ENCODE measurements at regions of chr20 and their contacts with region 1.

Region 1: DNA sequence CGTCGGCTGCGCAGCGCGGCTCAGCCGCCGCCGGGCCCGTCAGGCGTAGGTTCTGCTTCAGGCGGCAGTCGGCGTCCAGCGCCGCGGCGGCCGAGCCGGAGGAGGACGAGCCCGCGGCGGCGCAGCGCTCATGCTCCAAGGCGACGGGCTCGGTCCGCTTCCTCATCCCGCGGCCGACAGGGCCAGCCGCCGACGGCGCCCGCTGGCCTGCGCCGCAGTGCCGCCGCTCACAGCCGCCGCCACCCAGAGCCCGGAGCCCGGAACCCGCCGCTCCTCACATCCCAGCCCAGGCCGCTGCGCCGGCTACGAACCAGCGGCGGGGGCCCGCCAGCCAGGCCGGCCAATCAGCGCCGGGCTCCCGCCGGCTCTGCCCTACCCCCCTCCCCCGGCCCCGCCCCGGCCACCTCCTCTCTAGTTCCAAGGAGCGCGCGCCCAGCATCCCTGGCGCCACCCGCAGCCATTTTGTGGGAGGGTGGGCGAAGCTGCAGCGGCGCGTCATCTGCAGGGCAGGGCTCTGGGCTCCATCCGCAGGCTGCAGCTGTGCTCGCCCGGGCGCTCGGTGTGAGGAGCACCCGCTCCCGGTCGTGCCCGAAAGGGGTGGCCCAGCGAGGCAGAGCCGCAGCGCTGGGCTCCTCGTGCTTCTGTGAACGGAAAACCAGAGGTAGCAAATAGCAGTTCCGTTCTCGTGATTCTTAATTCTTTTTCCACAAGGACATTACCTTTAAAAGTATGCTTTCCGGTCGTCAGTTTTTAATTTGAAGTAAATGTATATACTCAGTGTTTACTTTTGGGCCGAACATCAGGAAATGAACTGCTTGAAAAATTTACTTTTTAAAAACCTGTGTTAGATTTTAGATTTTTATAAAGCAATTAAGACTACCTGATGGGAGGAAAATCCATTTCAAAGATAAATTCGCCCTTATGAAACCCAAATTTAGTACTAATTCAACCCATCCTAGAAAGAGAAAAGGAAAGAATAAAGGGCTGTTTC is at the start of gene ABHD12:
- H3K4me3 Mint-ChIP-seq: peak within 1 kb of the TSS; percentile 81
- H3K27ac Mint-ChIP-seq: peak within 1 kb of the TSS; percentile 92
- H3K4me1 Mint-ChIP-seq: peaks cover 17% of the 10 kb centered on the region
- H3K27me3 Mint-ChIP-seq: no peaks in the 10 kb centered on the region

Region 2: DNA sequence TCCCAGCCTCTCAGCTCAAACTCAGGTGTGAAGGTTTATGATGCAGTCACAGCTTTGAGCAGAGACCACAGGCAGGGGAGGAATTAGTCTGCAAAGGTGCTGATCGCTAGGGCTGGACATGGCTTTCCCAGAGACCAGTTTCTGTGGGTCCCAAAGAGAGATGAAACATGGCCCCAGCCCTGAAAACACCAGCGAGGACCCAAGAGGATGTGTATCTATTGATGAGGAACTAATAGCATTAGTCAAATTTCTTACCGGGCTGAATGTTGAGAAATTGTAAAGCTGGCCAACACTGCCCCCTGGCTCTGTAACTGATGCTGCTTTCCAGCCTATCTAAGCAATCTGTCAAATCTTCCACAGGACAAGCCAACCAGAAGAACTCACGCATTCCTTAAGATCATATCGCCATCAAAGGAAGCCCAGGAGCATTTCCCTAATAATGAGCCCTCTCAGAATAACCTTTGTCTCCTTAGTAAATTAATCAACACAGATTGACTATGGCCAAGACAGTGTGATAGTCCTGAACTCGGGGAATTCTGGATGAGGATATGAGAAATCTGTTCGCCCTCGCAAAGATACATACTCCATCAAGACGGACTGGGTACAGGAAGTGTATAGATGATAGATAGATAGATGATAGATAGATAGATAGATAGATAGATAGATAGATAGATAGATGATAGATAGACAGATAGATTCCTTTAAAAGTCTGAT is 325.1 kb before region 1 on chr20:
- intact Hi-C with region 1: loop called (anchors 10 kb)
- H3K4me3 Mint-ChIP-seq: no peak overlapping the region
- H3K27ac Mint-ChIP-seq: no peak overlapping the region
- H3K4me1 Mint-ChIP-seq: peaks cover 5% of the 10 kb centered on the region
- H3K27me3 Mint-ChIP-seq: peaks cover 40% of the 10 kb centered on the region

Region 3: GRCh38 chr20:25247956-25248785 is 142.7 kb before region 1 on chr20 and contains the start of gene PYGB:
- intact Hi-C with region 1: loop called (anchors 2 kb)
- H3K4me3 Mint-ChIP-seq: peak within 1 kb of the TSS; percentile 91
- H3K27ac Mint-ChIP-seq: peak within 1 kb of the TSS; percentile 82
- H3K4me1 Mint-ChIP-seq: peaks cover 59% of the 10 kb centered on the region
- H3K27me3 Mint-ChIP-seq: peaks cover 6% of the 10 kb centered on the region

Region 4: DNA sequence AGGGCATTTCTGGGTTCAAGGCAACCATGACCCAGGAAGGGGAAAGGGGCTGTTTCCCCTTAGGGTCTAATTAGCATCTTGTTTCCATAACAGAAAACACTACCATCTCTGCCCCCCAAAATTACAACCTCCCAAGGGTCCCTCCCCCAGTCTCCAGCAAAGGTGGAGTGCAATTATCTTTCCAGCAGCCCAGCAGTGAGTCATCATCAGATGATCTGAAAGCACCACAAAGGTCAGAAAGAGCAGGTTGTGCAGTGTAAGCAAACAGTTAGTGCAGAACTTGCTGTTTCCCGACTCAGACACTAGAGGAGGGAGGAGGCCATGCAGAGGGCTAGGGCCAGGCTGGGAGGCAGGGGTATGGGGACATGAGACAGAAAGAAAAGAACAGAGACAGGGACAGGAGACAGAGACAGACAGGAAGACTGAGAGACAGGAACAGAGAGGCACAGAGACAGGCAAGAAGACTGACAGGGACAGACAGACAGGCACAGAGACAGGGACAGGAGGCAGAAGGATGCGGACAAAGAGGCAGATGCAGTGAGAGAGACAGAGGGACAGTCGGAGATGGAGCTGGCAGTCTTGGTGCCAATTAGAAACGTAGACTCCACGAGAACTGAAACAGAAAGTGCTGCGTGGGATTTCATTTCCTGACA is 80.4 kb before region 1 on chr20:
- intact Hi-C with region 1: loop called (anchors 2 kb)
- H3K4me3 Mint-ChIP-seq: peak overlapping the region; percentile 77
- H3K27ac Mint-ChIP-seq: peak overlapping the region; percentile 96
- H3K4me1 Mint-ChIP-seq: peaks cover 69% of the 10 kb centered on the region
- H3K27me3 Mint-ChIP-seq: no peaks in the 10 kb centered on the region

Region 5: GRCh38 chr20:25353747-25354705 is 36.8 kb before region 1 on chr20:
- intact Hi-C with region 1: loop called (anchors 5 kb)
- H3K4me3 Mint-ChIP-seq: no peak overlapping the region
- H3K27ac Mint-ChIP-seq: peak overlapping the region; percentile 76
- H3K4me1 Mint-ChIP-seq: peaks cover 73% of the 10 kb centered on the region
- H3K27me3 Mint-ChIP-seq: no peaks in the 10 kb centered on the region

Region 6: GRCh38 chr20:25407311-25408169 is 16.7 kb after region 1 on chr20 and contains the start of gene GINS1:
- intact Hi-C with region 1: loop called (anchors 2 kb)
- H3K4me3 Mint-ChIP-seq: peak within 1 kb of the TSS; percentile 91
- H3K27ac Mint-ChIP-seq: peak within 1 kb of the TSS; percentile 86
- H3K4me1 Mint-ChIP-seq: peaks cover 14% of the 10 kb centered on the region
- H3K27me3 Mint-ChIP-seq: no peaks in the 10 kb centered on the region

Region 7: DNA sequence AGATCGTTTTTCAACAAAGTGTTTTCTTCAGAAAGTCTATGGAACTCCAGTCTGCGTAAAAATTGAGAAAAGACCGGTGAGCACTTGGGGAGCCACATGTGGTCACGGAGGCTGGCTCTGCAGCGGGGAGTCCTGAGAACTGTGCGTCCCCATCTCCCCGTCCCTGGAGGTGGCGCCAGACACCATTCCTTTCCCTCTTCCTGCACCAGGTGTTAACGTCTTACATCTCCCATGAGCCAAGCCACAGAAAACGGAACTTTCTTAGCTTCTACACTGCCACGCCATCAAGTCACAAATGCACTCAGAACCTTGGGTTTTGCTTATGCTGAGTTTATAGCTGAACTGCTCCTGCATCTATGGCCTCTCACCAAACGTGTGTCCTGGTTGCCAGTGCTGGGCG is 79.2 kb after region 1 on chr20:
- intact Hi-C with region 1: no loop called
- H3K4me3 Mint-ChIP-seq: no peak overlapping the region
- H3K27ac Mint-ChIP-seq: no peak overlapping the region
- H3K4me1 Mint-ChIP-seq: peaks cover 6% of the 10 kb centered on the region
- H3K27me3 Mint-ChIP-seq: peaks cover 3% of the 10 kb centered on the region

Measured in dendritic cell treated with granulocyte-macrophage colony-stimulating factor and Interleukin-4, amounts not matched to agents 40 ng/mL and 50 ng/mL, for 4 days (primary cell).